ENCODE measurements at regions of chr9 and their contacts with region 1.

Region 1: DNA sequence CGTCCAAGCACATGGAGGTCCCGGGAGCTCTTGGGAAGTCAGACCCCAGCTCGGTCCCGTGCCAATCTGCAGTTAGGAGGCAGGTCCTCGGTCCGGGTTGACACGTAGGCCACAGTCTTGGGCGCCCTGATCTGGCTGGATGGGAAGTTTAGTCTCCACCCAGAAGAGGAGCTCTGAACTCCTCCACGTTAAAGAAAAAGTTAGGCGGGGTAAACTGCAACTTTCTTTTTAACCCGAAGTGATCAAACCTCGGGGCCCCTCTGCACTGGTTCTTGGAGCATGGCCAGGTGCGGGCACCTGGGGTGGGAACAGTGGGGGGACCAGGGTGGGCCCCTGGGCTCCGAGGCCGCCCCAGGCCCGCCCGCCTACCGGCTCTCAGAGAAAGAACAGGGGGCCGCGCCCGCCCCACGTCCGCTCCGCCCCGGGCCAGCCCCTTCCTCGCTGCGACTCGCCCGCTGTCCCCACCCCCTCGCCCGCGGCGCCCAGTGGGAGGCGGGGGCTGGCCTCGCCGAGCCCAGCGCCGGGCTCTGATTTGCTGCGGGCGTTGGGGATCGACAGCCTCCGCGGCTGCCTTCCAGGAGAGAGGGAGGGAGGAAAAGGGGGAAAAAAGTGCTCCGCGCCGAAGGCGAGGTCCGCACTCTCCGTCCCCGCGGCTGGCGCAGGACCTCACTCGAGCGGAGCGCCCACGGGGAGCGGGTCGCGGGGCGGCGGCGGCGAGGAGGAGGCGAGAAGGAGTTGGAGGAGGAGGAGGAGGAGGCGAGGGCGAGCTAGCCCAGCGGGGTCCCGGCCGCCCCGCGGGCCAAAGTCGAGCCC is at the start of gene COL5A1:
- DNase-seq: peak; percentile 91 to 94 (median 93)
- ATAC-seq: peak; percentile 81 to 92 (median 90)
- H3K4me3 ChIP-seq: peak within 1 kb of the TSS; percentile 59 to 89 (median 76)
- H3K27ac ChIP-seq: peak within 1 kb of the TSS; percentile 27 to 96 (median 82)
- H3K4me1 ChIP-seq: peaks cover 0 to 35% (median 11%) of the 10 kb centered on the region in 12 donors
- H3K27me3 ChIP-seq: peaks cover 0 to 21% (median 0%) of the 10 kb centered on the region in 9 donors
- CTCF ChIP-seq: peak in 5 of 12 donors; percentile 16 to 50 (median 35)
- POLR2A ChIP-seq: peak in 1 of 2 donors; percentile 67
- total RNA-seq, gene COL5A1: 7.6 to 91.3 (median 13.4) TPM

Region 2: GRCh38 chr9:134163353-134164196 is 477.8 kb before region 1 on chr9:
- intact Hi-C with region 1: loop called in 1 of 10 experiments (anchors 10 kb)
- DNase-seq: peak; percentile 55 to 84 (median 76)
- ATAC-seq: peak in 2 of 4 donors; percentile 35 to 40
- H3K4me3 ChIP-seq: peak overlapping the region in 1 of 12 donors; percentile 28
- H3K27ac ChIP-seq: peak overlapping the region in 2 of 12 donors; percentile 20 to 83
- H3K4me1 ChIP-seq: peaks cover 0 to 16% (median 7%) of the 10 kb centered on the region in 12 donors
- H3K27me3 ChIP-seq: no peaks in the 10 kb centered on the region
- CTCF ChIP-seq: peak in 10 of 12 donors; percentile 21 to 56 (median 28)
- POLR2A ChIP-seq: no peak

Region 3: DNA sequence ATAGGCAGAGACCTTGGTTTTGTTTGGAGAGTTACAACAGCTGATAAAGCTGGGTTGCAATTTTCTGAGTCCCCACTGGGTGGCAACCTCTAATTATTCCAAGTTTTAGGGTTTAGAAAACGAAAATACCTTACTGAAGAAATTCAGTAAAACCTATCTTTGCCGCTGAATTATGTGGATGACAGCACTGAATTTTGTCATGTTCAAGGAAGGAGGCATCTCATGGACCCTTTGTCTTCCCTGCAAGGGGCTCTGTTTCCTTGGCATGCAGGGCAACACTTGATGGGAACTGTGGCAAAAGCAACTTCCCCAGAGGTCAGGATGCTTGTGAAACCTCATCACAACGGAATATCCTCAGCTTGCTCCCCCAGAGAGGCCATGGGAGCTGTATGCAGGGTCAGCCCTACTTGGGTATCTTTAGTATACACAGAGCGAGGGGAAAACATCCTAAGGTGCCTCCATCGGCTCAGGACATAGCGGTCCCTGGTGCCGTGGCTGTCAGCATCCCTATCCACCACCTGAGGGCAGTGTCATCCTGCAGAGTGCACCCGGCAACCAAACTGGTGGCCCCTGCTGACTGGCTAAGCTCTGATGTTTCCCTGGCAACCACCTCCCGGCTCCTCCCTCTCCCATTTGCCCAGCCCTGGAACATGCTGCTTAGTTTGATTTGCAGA is 192.0 kb before region 1 on chr9:
- intact Hi-C with region 1: loop called in 5 of 10 experiments (anchors 2 to 10 kb)
- DNase-seq: peak; percentile 91 to 95 (median 94)
- ATAC-seq: peak; percentile 93 to 98 (median 96)
- H3K4me3 ChIP-seq: no peak overlapping the region
- H3K27ac ChIP-seq: no peak overlapping the region
- H3K4me1 ChIP-seq: peaks cover 0 to 5% (median 0%) of the 10 kb centered on the region in 12 donors
- H3K27me3 ChIP-seq: no peaks in the 10 kb centered on the region
- CTCF ChIP-seq: peak; percentile 84 to 97 (median 93)
- POLR2A ChIP-seq: no peak

Region 4: DNA sequence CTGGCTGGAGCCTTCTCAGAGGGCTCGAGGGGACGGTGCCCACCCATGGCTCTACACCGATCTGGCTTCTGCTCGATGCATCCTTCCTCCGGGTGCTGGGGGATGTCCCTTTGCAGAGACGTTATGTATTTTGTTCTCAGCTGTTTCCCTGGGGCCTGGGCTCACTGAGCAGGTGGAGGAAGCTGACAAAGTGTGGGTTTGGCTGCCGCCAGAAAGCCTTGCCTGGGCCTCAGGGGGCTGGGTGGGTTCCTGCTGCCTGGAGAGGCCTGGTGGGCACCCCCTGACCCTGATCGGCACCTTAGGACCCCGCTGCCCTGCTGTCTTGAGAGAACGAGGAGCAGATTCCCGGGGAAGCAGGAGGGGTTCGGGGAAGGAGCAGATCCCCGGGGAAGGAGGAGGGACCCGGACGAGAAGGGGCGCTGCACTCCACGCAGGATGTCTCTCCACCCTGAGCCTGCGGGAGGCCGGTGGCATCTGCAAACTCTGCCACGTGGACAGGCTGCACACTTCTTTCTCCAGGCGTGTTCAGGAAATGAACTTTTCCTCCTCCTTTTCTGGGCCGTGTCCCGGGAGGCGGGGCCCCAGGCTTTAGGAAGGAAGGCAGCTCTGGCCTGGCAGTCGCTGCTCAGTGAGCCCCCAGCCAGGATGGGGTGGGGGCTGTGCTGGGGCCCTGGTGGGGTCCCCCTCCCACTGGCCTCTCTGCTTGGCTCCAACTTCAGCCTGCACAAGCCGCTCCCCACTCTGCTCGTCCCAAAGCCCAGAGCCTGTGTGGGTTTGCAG is 166.2 kb before region 1 on chr9:
- intact Hi-C with region 1: loop called in 2 of 10 experiments (anchors 5 kb)
- DNase-seq: peak; percentile 78 to 84 (median 83)
- ATAC-seq: peak; percentile 48 to 91 (median 68)
- H3K4me3 ChIP-seq: no peak overlapping the region
- H3K27ac ChIP-seq: peak overlapping the region in 11 of 12 donors; percentile 42 to 76 (median 65)
- H3K4me1 ChIP-seq: peaks cover 0 to 42% (median 23%) of the 10 kb centered on the region in 12 donors
- H3K27me3 ChIP-seq: no peaks in the 10 kb centered on the region
- CTCF ChIP-seq: no peak
- POLR2A ChIP-seq: no peak

Region 5: DNA sequence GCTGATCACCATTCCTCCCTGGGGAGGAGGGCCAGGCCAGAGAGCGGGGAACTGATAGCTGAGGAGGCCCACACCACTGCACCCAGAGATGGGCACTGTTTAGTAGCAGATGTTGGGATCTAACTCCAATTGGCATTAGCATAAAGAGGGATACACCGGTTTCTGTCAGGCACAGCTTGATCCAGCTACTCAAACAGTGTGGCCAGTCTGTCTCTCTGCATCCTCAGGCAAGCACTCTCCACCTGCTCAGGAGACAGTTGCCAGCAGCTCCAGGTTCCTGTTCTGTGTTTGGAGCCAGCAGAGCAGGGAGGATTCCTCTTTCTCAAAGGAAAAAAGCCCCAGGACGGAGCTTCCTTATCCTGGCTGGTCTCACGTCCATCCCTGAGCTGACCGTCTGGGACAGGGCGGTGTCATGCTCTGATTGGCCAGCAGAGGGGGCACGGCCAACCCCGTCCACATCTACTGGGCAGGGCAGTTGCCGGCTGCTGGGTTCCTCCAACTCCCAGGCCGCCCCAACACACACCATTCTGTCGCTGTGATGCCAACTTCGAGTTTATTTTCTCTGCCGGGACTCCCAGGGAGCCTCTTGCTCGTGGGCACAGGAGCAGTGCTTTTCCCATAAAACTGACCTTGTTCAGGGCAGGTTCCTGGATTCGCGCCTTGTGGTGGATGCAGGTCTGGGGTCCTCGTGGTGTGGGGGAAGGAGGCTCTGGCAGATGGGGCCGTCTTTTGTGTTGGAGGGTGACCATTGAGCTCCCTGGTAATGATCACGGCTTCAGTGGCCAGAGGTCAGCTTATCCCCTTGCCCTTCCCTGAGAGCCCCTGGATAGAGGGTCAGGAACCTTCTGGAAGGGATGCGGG is 48.2 kb after region 1 on chr9:
- intact Hi-C with region 1: loop called in 1 of 10 experiments (anchors 5 kb)
- DNase-seq: peak; percentile 66 to 86 (median 70)
- ATAC-seq: peak; percentile 79 to 84 (median 82)
- H3K4me3 ChIP-seq: no peak overlapping the region
- H3K27ac ChIP-seq: peak overlapping the region in 2 of 12 donors; percentile 17 to 53
- H3K4me1 ChIP-seq: peaks cover 0 to 38% (median 8%) of the 10 kb centered on the region in 12 donors
- H3K27me3 ChIP-seq: no peaks in the 10 kb centered on the region
- CTCF ChIP-seq: peak; percentile 63 to 89 (median 80)
- POLR2A ChIP-seq: no peak